Mammary epithelial cell (primary cell): ENCODE measurements at regions of chr10 and their contacts with region 1.

Region 1: DNA sequence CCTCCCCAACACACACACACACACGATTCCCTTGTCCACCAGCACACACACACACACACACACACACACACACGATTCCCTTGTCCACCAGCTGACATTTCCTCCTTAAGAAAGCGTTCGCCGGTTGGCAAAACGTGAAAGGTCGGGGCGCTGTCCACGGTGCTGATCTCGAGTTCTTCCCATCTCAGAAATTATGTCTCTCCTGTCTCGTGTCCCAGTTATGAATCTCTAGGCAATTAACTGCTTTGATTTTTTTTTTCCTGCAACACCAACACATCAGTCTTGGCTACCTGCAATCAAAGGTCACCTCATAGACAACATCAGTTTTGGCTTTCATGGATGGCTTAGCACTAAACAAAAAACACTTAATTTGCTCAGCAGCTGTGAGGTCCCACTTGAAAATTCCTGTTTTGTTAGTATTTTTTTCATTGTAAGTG is 1.9 kb downstream of the INA start:
- DNase-seq: no peak
- H3K4me3 ChIP-seq: no peak overlapping the region
- H3K27ac ChIP-seq: no peak overlapping the region
- H3K4me1 ChIP-seq: peaks cover 20% of the 10 kb centered on the region
- H3K27me3 ChIP-seq: peaks cover 15% of the 10 kb centered on the region
- CTCF ChIP-seq: no peak

Region 2: GRCh38 chr10:103265717-103266329 is 13.1 kb before region 1 on chr10:
- CTCF ChIA-PET with region 1: no interaction called
- dilution Hi-C with region 1: no loop called
- in situ Hi-C with region 1: no loop called
- intact Hi-C with region 1: loop called (anchors 2 kb)
- DNase-seq: peak; percentile 59
- H3K4me3 ChIP-seq: no peak overlapping the region
- H3K27ac ChIP-seq: no peak overlapping the region
- H3K4me1 ChIP-seq: no peaks in the 10 kb centered on the region
- H3K27me3 ChIP-seq: no peaks in the 10 kb centered on the region
- CTCF ChIP-seq: no peak

Region 3: GRCh38 chr10:103316087-103316486 is 37.2 kb after region 1 on chr10:
- CTCF ChIA-PET with region 1: no interaction called
- dilution Hi-C with region 1: loop called (anchors 5 kb)
- in situ Hi-C with region 1: no loop called
- intact Hi-C with region 1: no loop called
- DNase-seq: no peak
- H3K4me3 ChIP-seq: no peak overlapping the region
- H3K27ac ChIP-seq: no peak overlapping the region
- H3K4me1 ChIP-seq: no peaks in the 10 kb centered on the region
- H3K27me3 ChIP-seq: no peaks in the 10 kb centered on the region
- CTCF ChIP-seq: no peak